Activated CD4-positive, alpha-beta T cell treated with anti-CD3 and anti-CD28 coated beads for 36 hours (primary cell): ENCODE measurements at regions of chr20 and their contacts with region 1.

Region 1: GRCh38 chr20:36754656-36755222 is 8.8 kb upstream of the NDRG3 start:
- DNase-seq: peak; percentile 47
- ATAC-seq: peak; percentile 86
- H3K4me3 Mint-ChIP-seq: no peak overlapping the region
- H3K27ac Mint-ChIP-seq: no peak overlapping the region
- H3K4me1 Mint-ChIP-seq: no peaks in the 10 kb centered on the region
- H3K27me3 Mint-ChIP-seq: no peaks in the 10 kb centered on the region

Region 2: DNA sequence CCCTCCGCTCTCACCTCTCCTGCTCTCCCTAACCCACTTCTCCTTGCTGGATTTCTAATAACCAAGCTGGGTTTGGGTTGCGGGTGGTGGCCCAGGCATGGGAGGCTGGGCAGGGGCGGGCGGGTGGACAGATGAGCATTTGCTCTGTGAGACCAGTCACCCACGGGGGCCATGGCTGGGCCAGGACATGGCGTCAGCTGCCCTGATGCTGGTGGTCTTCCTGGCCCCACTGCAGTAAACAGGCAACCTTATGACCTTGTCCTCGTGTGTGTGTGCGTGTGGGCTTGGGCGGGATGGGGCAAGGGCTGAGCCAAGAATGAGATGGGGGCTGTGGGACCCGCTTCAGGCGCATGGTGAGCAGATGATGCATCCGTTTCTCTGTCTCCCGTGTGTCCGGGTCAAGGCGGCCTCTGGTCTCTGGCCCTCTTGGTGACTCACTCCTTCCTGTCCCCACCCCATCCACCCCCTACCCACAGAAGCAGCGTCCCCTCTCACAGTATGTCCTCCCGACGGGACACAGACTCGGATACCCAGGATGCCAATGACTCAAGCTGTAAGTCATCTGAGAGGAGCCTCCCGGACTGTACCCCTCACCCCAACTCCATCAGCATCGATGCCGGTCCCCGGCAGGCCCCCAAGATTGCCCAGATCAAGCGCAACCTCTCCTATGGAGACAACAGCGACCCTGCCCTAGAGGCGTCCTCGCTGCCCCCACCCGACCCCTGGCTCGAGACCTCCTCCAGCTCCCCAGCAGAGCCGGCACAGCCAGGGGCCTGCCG is 254.8 kb before region 1 on chr20:
- CTCF ChIA-PET with region 1: no interaction called
- POLR2A ChIA-PET with region 1: no interaction called
- intact Hi-C with region 1: no loop called
- DNase-seq: no peak
- ATAC-seq: no peak
- H3K4me3 Mint-ChIP-seq: no peak overlapping the region
- H3K27ac Mint-ChIP-seq: no peak overlapping the region
- H3K4me1 Mint-ChIP-seq: peaks cover 8% of the 10 kb centered on the region
- H3K27me3 Mint-ChIP-seq: no peaks in the 10 kb centered on the region

Region 3: GRCh38 chr20:36613974-36614373 is 140.8 kb before region 1 on chr20:
- CTCF ChIA-PET with region 1: interaction called, 11 read pairs
- POLR2A ChIA-PET with region 1: interaction called, 5 read pairs
- intact Hi-C with region 1: loop called in 1 of 2 experiments (anchors 1 kb)
- DNase-seq: no peak
- ATAC-seq: no peak
- H3K4me3 Mint-ChIP-seq: no peak overlapping the region
- H3K27ac Mint-ChIP-seq: peak overlapping the region; percentile 39
- H3K4me1 Mint-ChIP-seq: peaks cover 3% of the 10 kb centered on the region
- H3K27me3 Mint-ChIP-seq: no peaks in the 10 kb centered on the region

Region 4: GRCh38 chr20:36717657-36718056 is 37.1 kb before region 1 on chr20:
- CTCF ChIA-PET with region 1: interaction called, 4 read pairs
- POLR2A ChIA-PET with region 1: no interaction called
- intact Hi-C with region 1: loop called in 1 of 2 experiments (anchors 2 kb)
- DNase-seq: peak; percentile 17
- ATAC-seq: no peak
- H3K4me3 Mint-ChIP-seq: no peak overlapping the region
- H3K27ac Mint-ChIP-seq: no peak overlapping the region
- H3K4me1 Mint-ChIP-seq: peaks cover 11% of the 10 kb centered on the region
- H3K27me3 Mint-ChIP-seq: no peaks in the 10 kb centered on the region

Region 5: DNA sequence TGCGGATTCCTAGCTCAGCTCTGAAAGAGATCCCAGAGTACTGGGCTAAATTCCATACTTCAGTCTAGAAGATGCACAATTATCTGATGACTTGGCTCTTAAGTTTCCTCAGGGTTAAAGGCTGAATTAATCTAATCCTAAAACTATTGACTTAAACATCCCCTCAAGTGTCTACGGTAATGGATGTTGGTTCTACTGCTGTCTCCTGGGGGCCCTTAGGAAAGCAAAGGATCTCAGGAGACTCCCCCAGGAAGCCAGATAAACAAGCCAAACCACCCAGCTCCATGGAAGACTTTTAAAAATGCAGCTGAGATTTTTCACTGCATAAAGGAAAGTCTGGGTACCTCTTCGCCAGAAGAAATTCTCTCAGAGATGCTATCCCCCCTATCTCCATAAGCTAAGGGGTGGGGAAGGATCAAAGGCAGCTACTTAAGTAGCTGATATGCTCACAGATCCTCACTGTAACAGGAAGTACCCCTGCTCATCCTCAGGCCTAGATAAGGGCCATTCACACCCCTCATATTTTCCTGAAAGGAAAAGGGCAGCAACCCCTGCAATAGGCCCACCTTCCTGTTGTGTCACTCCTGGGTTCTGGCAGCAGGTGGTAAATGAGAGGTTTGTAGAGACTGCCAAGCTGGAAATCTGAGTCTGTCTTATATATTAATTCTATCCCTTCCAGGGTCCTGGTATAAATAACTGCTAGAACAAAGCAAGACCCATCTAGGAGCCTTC is 18.1 kb before region 1 on chr20:
- CTCF ChIA-PET with region 1: interaction called, 20 read pairs
- POLR2A ChIA-PET with region 1: no interaction called
- intact Hi-C with region 1: no loop called
- DNase-seq: no peak
- ATAC-seq: no peak
- H3K4me3 Mint-ChIP-seq: no peak overlapping the region
- H3K27ac Mint-ChIP-seq: no peak overlapping the region
- H3K4me1 Mint-ChIP-seq: peaks cover 33% of the 10 kb centered on the region
- H3K27me3 Mint-ChIP-seq: no peaks in the 10 kb centered on the region

Region 6: GRCh38 chr20:36792422-36792821 is 37.7 kb after region 1 on chr20:
- CTCF ChIA-PET with region 1: no interaction called
- POLR2A ChIA-PET with region 1: no interaction called
- intact Hi-C with region 1: no loop called
- DNase-seq: peak; percentile 35
- ATAC-seq: no peak
- H3K4me3 Mint-ChIP-seq: no peak overlapping the region
- H3K27ac Mint-ChIP-seq: no peak overlapping the region
- H3K4me1 Mint-ChIP-seq: no peaks in the 10 kb centered on the region
- H3K27me3 Mint-ChIP-seq: no peaks in the 10 kb centered on the region

Region 7: DNA sequence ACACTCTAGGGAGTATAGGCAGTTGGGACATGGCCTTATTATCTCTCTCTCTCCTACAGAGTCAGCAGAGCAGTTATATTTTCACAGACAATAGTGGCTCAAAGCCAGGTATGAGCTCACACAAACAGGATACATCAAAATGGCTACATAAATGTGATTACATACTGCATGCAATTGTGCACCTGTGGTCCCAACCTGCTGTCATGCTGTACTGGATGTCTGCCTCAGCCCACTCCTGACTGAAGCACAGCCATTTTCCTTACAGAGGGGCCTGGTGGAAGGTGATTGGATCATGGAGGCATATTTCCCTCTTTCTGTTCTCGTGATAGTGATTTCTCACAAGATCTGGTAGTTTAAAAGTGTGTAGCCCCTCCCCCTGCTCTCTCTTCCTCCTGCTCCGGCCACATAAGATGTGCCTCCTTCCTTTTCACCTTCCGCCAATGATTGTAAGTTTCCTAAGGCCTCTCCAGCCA is 233.8 kb after region 1 on chr20:
- CTCF ChIA-PET with region 1: no interaction called
- POLR2A ChIA-PET with region 1: no interaction called
- intact Hi-C with region 1: no loop called
- DNase-seq: peak; percentile 20
- ATAC-seq: peak; percentile 70
- H3K4me3 Mint-ChIP-seq: no peak overlapping the region
- H3K27ac Mint-ChIP-seq: peak overlapping the region; percentile 35
- H3K4me1 Mint-ChIP-seq: peaks cover 32% of the 10 kb centered on the region
- H3K27me3 Mint-ChIP-seq: no peaks in the 10 kb centered on the region

Region 8: GRCh38 chr20:36998652-36999051 is 243.9 kb after region 1 on chr20:
- CTCF ChIA-PET with region 1: no interaction called
- POLR2A ChIA-PET with region 1: no interaction called
- intact Hi-C with region 1: no loop called
- DNase-seq: no peak
- ATAC-seq: no peak
- H3K4me3 Mint-ChIP-seq: no peak overlapping the region
- H3K27ac Mint-ChIP-seq: peak overlapping the region; percentile 37
- H3K4me1 Mint-ChIP-seq: peaks cover 3% of the 10 kb centered on the region
- H3K27me3 Mint-ChIP-seq: no peaks in the 10 kb centered on the region